ENCODE measurements at regions of chr11 and their contacts with region 1.

Region 1: DNA sequence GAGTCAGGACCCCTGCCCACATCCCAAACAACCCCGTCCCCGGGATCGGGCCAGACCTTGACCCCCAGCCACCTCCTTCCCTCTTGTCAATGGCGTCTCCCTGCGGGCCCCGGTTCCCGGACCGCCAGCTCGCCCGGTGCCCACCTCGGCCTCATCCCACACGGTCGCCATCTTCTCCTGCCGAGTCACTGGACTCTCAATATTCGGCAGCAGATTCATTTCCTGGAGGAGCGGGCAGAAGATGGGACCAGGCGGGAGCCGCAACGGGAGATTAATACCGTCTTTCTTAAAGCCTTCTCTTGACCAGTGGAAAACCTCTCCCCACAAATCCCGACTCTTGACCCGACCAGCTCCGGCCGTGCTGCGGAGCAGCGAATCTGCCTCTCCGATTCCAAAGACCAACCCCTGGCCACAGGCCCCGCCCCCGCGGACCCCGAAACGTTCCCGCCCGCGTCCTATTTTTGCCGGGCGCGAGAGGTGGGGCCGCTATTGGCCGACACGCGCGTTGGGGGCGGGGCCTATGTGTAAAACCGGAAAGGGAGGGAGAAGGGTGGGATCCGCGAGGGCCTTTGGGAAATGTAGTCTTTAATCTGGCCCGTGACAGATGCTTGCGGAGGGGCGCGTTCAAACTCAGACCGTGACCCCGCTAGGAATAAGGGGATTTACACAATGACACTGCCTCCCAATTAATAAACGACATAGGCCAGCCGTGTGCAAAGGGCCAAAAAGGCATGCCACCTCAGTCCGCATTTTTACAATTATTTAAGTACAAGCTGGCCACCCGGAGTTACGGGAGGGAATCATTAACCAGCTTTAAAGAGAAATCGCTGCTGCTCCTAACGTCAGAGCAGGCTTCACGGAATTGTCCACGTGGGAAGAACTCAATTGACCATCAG is at the start of gene PSMC3:
- DNase-seq: peak; percentile 96
- ATAC-seq: peak; percentile 98
- H3K4me3 Mint-ChIP-seq: peak within 1 kb of the TSS; percentile 99
- H3K27ac Mint-ChIP-seq: peak within 1 kb of the TSS; percentile 99
- H3K4me1 Mint-ChIP-seq: peaks cover 20% of the 10 kb centered on the region
- H3K27me3 Mint-ChIP-seq: no peaks in the 10 kb centered on the region
- CTCF ChIP-seq: no peak
- total RNA-seq, gene PSMC3: 101 and 126 TPM in 2 replicates

Region 2: DNA sequence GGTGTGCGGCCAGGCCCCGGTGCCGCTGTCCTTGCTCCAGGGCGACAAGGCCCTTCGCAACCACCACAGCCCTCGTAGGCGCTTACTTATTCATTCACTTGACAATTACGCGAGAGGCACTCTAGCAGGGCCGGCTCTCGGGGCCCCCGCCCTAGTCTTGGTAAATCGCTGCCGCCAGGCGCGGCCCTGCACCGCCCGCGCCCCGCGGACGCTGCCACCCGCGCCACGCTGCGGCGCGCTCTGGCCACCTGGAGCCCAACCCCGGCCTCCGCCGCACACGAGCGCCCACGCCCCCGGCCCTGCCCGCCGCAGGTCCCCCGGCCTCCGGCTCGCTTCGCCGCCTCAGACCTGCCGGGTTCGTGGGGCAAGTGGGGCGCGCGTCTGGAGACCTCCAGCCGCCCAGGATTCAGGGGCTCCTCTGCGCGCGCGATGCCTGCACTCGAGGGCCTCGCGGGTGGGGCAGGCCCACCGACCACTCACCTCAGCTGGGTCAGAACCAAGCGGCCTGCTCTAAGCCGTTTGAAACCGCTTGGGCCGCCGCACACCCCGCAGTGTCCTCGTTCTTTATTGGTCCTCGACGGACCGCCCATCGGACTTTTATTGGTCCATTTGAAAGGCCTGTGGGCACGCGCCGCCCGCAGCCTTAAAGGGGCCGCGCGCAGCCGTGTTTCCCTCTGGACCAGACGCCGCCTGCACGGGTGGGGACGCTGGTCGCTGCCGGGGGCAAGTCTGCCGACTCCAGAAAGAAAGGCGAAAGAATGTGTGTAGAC is 580.4 kb before region 1 on chr11 and contains the start of gene CKAP5:
- CTCF ChIA-PET with region 1: no interaction called
- POLR2A ChIA-PET with region 1: no interaction called
- intact Hi-C with region 1: loop called (anchors 5 kb)
- DNase-seq: peak; percentile 77
- ATAC-seq: peak; percentile 88
- H3K4me3 Mint-ChIP-seq: peak within 1 kb of the TSS; percentile 96
- H3K27ac Mint-ChIP-seq: peak within 1 kb of the TSS; percentile 88
- H3K4me1 Mint-ChIP-seq: peaks cover 33% of the 10 kb centered on the region
- H3K27me3 Mint-ChIP-seq: no peaks in the 10 kb centered on the region
- CTCF ChIP-seq: no peak
- total RNA-seq, gene CKAP5: 50.4 and 52.9 TPM in 2 replicates

Region 3: DNA sequence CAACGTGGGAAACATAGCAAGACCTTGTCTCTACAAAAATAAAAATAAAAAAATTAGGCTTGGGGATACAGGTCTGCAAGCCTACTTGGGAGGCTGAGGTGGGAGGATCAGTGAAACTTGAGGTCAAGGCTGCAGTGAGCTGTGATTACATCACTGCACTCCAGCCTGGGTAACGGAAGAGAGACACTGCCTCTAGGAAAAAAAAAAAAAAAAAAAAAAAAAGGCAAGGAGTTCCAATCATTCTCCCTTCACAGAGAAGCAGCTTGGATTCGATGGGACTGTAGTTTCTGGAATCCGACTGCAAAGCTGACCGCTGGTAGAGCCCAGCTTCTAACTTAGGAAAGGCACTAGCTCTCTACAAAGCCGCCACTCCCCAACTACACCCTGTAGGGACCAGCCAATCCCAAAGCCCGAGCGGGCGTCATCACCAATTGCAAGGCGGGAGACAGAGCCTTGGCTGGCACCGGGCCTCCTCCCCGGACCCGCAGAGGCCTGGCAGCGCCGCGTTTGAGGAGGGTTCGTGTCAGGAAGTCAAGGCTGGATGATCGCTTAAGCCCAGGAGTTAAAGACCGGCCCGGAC is 212.2 kb before region 1 on chr11:
- CTCF ChIA-PET with region 1: no interaction called
- POLR2A ChIA-PET with region 1: interaction called, 10 read pairs
- intact Hi-C with region 1: loop called (anchors 1 kb)
- DNase-seq: peak; percentile 72
- ATAC-seq: peak; percentile 73
- H3K4me3 Mint-ChIP-seq: peak overlapping the region; percentile 99
- H3K27ac Mint-ChIP-seq: peak overlapping the region; percentile 100
- H3K4me1 Mint-ChIP-seq: peaks cover 35% of the 10 kb centered on the region
- H3K27me3 Mint-ChIP-seq: no peaks in the 10 kb centered on the region
- CTCF ChIP-seq: no peak

Region 4: DNA sequence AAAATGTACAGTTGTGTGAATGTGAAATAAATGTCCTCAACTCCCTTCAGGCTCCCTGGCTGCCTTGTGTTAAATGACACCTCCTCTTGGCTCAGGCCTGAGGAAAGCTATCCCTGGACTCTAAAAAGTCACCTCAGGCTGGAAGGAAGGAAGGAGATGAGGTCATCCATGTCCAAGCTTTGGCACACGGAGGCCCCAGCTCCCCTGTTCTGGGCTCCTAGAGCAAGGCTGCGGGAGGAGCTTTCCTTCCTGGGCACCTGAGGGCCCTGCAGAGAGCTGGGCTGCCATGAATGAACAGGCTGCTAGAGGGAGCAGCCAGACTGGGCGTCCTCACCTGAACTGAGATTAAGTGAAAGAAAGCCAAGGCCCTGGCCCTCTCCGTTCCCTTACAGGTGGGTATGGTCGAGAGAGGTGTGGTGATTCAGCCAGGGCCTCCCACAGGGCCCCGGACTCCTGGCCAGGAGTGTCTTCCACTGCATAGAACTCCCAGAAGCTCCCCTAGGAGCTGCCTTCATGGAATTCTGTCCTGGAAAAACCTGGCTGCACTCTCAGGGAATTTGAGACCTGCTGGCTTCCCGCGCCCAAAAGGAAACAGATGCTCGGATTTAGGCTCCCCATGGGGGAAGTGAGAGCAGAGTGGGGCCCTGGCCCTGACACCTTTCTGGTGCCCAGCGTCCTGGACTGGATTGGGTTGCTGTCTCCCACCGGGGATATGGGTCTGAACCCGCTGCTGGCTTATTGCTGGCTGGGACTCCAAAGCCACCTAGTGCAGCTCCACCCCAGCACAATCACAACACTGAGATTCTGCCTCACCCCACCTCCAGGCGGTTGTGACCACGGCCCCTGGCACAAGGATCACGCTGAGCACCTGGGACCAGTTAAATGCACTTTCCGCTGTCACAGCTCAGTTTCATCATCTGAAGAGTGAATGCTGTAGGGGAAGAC is 96.0 kb before region 1 on chr11:
- CTCF ChIA-PET with region 1: no interaction called
- POLR2A ChIA-PET with region 1: no interaction called
- intact Hi-C with region 1: loop called (anchors 5 kb)
- DNase-seq: no peak
- ATAC-seq: no peak
- H3K4me3 Mint-ChIP-seq: no peak overlapping the region
- H3K27ac Mint-ChIP-seq: no peak overlapping the region
- H3K4me1 Mint-ChIP-seq: peaks cover 14% of the 10 kb centered on the region
- H3K27me3 Mint-ChIP-seq: no peaks in the 10 kb centered on the region
- CTCF ChIP-seq: no peak

Region 5: GRCh38 chr11:47399860-47400767 is 26.2 kb before region 1 on chr11:
- CTCF ChIA-PET with region 1: no interaction called
- POLR2A ChIA-PET with region 1: interaction called, 6 read pairs
- intact Hi-C with region 1: loop called (anchors 2 kb)
- DNase-seq: peak; percentile 56
- ATAC-seq: peak; percentile 79
- H3K4me3 Mint-ChIP-seq: peak overlapping the region; percentile 88
- H3K27ac Mint-ChIP-seq: peak overlapping the region; percentile 95
- H3K4me1 Mint-ChIP-seq: peaks cover 47% of the 10 kb centered on the region
- H3K27me3 Mint-ChIP-seq: no peaks in the 10 kb centered on the region
- CTCF ChIP-seq: no peak

Region 6: GRCh38 chr11:47523468-47524225 is 97.3 kb after region 1 on chr11:
- CTCF ChIA-PET with region 1: no interaction called
- POLR2A ChIA-PET with region 1: no interaction called
- intact Hi-C with region 1: no loop called
- DNase-seq: no peak
- ATAC-seq: peak; percentile 80
- H3K4me3 Mint-ChIP-seq: peak overlapping the region; percentile 65
- H3K27ac Mint-ChIP-seq: peak overlapping the region; percentile 85
- H3K4me1 Mint-ChIP-seq: peaks cover 68% of the 10 kb centered on the region
- H3K27me3 Mint-ChIP-seq: no peaks in the 10 kb centered on the region
- CTCF ChIP-seq: no peak

Region 7: DNA sequence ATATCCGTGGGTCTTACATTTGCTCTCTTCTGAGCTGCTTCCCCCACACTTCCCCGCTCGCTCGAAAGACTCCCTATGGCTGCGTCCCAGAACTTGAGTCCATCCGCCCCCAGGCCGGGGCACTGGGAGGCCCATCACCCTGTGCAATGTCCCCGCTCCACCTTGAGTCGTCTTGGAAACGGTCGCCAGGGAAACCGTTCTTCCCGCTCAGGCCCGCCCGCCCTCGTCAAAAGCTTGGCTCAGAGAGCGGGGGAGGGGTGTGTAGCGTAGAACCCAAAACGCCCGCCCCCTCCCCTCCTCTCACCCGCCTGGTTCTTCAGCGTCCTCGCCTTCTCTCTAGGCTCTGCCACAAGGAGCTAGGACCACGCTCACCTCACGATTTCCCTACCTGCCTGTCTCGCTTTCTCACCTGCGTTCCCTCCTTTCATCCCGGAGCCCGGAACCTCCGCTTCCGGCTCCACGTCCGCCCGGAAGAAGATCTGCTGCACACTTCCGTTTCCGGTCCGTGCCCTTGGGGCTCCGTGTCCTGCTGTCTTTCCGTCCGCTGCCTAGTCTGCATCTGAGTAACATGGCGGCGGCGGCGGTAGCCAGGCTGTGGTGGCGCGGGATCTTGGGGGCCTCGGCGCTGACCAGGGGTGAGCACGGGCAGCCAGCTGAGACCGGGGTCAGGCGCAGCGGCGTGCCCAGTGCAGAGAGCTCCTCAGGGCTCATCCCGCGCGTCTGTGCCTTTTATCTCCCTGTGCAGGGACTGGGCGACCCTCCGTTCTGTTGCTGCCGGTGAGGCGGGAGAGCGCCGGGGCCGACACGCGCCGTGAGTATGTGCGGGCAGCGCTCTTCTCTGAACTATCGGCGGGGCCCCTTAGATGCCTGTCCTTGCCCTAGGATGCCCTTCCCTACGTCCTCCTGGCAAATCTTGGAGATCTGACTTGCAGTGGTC is 152.5 kb after region 1 on chr11 and contains the starts of genes KBTBD4 and NDUFS3:
- CTCF ChIA-PET with region 1: no interaction called
- POLR2A ChIA-PET with region 1: no interaction called
- intact Hi-C with region 1: loop called (anchors 1 kb)
- DNase-seq: peak; percentile 90
- ATAC-seq: peak; percentile 93
- H3K4me3 Mint-ChIP-seq: peak within 1 kb of the TSS; percentile 99
- H3K27ac Mint-ChIP-seq: peak within 1 kb of the TSS; percentile 97
- H3K4me1 Mint-ChIP-seq: peaks cover 38% of the 10 kb centered on the region
- H3K27me3 Mint-ChIP-seq: no peaks in the 10 kb centered on the region
- CTCF ChIP-seq: no peak
- total RNA-seq, gene KBTBD4: 19.5 and 20.4 TPM in 2 replicates
- total RNA-seq, gene NDUFS3: 95.9 and 102 TPM in 2 replicates

Region 8: DNA sequence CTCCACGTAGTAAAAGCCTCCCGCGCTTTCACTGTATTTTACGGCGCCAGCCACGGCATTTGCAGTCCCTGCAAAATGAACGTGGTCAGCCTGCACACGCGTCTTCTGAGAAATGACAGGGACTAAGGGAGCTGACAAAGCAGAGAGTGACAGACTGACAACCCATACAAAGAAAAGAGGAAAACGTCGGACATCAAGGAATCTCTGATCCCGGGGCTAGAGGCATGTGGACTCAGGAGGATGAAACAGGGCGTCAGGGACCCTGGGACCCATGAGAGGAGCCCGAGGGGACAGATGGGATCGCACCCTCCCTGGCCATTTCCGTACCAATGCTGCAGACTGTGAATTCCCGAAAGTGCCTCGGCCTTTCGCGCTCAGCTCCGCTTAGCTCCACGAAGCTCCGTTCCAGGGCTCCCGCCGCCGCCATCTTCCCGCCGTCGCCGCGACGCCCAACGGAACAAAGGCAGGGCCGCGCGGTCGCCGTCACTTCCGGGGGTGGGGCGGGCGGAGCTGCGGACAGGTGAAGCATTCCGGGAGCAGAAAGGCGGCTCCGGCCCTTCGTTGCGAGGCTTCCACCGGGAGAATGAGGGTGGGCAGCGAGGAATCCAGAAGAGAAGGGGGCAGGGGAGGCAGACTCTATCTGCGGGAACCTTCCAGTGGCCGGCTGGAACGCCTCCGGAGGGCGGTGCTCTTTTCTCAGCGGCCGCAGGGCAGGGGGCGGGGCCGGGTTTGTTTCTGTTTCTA is 421.8 kb after region 1 on chr11 and contains the start of gene NUP160:
- CTCF ChIA-PET with region 1: no interaction called
- POLR2A ChIA-PET with region 1: interaction called, 3 read pairs
- intact Hi-C with region 1: loop called (anchors 1 kb)
- DNase-seq: peak; percentile 92
- ATAC-seq: peak; percentile 83
- H3K4me3 Mint-ChIP-seq: peak within 1 kb of the TSS; percentile 98
- H3K27ac Mint-ChIP-seq: peak within 1 kb of the TSS; percentile 97
- H3K4me1 Mint-ChIP-seq: peaks cover 67% of the 10 kb centered on the region
- H3K27me3 Mint-ChIP-seq: no peaks in the 10 kb centered on the region
- CTCF ChIP-seq: no peak
- total RNA-seq, gene NUP160: 53.2 and 70.8 TPM in 2 replicates

Measured in activated B cell treated with CpG ODN at 0.5 μM for 24 hours (primary cell).